Mammary epithelial cell (primary cell): ENCODE measurements at regions of chr17 and their contacts with region 1.

Region 1: GRCh38 chr17:78598013-78598471 is 20.8 kb upstream of the DNAH17 start:
- DNase-seq: peak; percentile 12
- H3K4me3 ChIP-seq: no peak overlapping the region
- H3K27ac ChIP-seq: no peak overlapping the region
- H3K4me1 ChIP-seq: no peaks in the 10 kb centered on the region
- H3K27me3 ChIP-seq: no peaks in the 10 kb centered on the region
- CTCF ChIP-seq: no peak

Region 2: GRCh38 chr17:78689029-78689428 is 91.0 kb after region 1 on chr17:
- CTCF ChIA-PET with region 1: no interaction called
- dilution Hi-C with region 1: loop called (anchors 10 kb)
- in situ Hi-C with region 1: no loop called
- intact Hi-C with region 1: no loop called
- DNase-seq: no peak
- H3K4me3 ChIP-seq: no peak overlapping the region
- H3K27ac ChIP-seq: no peak overlapping the region
- H3K4me1 ChIP-seq: no peaks in the 10 kb centered on the region
- H3K27me3 ChIP-seq: no peaks in the 10 kb centered on the region
- CTCF ChIP-seq: peak; percentile 7 to 12